ENCODE measurements at regions of chr4 and their contacts with region 1.

Region 1: DNA sequence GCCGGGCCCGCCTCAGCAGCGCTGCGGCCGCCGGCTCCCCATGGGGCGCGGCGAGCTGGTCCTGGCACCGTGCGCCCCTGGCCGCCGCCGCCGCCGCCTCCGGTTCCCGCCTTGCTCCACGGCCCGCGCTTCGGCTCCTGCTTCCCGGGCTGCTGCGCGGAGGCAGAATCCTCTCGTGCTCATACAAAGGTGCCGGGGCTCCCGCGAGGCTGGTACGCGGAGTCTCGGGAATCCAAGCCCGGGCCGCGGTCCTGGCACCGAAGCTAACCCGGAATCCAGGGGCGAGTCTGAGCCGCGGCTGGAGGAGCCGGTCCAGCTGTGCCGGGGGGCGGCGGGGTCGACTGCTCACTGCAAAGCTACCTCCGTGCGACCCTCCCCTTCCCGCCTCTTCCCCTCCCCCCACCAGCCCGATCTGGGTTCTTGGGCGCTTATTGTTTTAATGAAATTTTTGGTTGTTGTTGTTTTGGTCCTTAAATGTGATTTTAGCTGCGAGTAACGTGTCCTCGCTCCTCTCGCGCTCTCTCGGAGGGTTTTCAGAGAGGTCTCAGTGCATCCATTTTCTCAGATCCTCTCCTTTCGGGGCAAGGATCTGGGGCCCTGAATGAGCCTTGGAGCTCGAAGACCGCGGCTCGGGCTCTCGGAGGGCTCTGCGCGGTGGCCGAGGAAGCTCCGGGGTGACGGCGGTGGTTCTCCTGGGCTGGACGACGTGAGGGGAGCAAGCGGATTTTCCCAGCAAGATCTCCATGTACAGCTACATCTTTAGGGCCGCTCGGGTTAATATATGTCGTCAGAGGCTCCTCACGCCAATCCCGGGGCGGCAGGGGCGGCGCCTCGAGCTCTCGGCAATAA is at the start of gene HAND2:
- DNase-seq: peak; percentile 91
- H3K4me3 ChIP-seq: peak within 1 kb of the TSS; percentile 61 to 92
- H3K27ac ChIP-seq: peak within 1 kb of the TSS; percentile 99
- H3K4me1 ChIP-seq: peaks cover 0 to 3% of the 10 kb centered on the region in 2 experiments; a peak in 2 of 4 replicates
- H3K27me3 ChIP-seq: no peaks in the 10 kb centered on the region
- CTCF ChIP-seq: no peak
- EP300 ChIP-seq: peak; percentile 16 to 25; a peak in 2 of 4 replicates
- RAD21 ChIP-seq: no peak
- polyA plus RNA-seq, gene HAND2: 94.2 and 106 TPM in 2 replicates

Region 2: GRCh38 chr4:173360587-173361221 is 169.0 kb before region 1 on chr4:
- CTCF ChIA-PET with region 1: no interaction called
- POLR2A ChIA-PET with region 1: no interaction called
- DNase-seq: no peak
- H3K4me3 ChIP-seq: no peak overlapping the region
- H3K27ac ChIP-seq: no peak overlapping the region
- H3K4me1 ChIP-seq: peaks cover 2 to 3% of the 10 kb centered on the region in 2 experiments; a peak in 1 of 4 replicates
- H3K27me3 ChIP-seq: no peaks in the 10 kb centered on the region
- CTCF ChIP-seq: peak; percentile 48
- EP300 ChIP-seq: no peak
- RAD21 ChIP-seq: peak; percentile 42

Region 3: GRCh38 chr4:173505924-173506518 is 23.7 kb before region 1 on chr4:
- CTCF ChIA-PET with region 1: interaction called, 3 read pairs
- POLR2A ChIA-PET with region 1: interaction called, 21 read pairs
- DNase-seq: peak; percentile 77
- H3K4me3 ChIP-seq: peak overlapping the region in 1 of 2 experiments; percentile 66; a peak in 2 of 4 replicates
- H3K27ac ChIP-seq: peak overlapping the region; percentile 82 to 99
- H3K4me1 ChIP-seq: peaks cover 8 to 51% of the 10 kb centered on the region in 2 experiments; a peak in 2 of 4 replicates
- H3K27me3 ChIP-seq: no peaks in the 10 kb centered on the region
- CTCF ChIP-seq: peak; percentile 84
- EP300 ChIP-seq: no peak
- RAD21 ChIP-seq: peak; percentile 83

Region 4: GRCh38 chr4:173556398-173557131 is 26.9 kb after region 1 on chr4:
- CTCF ChIA-PET with region 1: no interaction called
- POLR2A ChIA-PET with region 1: no interaction called
- DNase-seq: no peak
- H3K4me3 ChIP-seq: no peak overlapping the region
- H3K27ac ChIP-seq: peak overlapping the region in 1 of 2 experiments; percentile 74; a peak in 2 of 4 replicates
- H3K4me1 ChIP-seq: peaks cover 0 to 12% of the 10 kb centered on the region in 2 experiments; a peak in 2 of 4 replicates
- H3K27me3 ChIP-seq: no peaks in the 10 kb centered on the region
- CTCF ChIP-seq: no peak
- EP300 ChIP-seq: no peak; a peak in 1 of 4 replicates
- RAD21 ChIP-seq: no peak

Region 5: DNA sequence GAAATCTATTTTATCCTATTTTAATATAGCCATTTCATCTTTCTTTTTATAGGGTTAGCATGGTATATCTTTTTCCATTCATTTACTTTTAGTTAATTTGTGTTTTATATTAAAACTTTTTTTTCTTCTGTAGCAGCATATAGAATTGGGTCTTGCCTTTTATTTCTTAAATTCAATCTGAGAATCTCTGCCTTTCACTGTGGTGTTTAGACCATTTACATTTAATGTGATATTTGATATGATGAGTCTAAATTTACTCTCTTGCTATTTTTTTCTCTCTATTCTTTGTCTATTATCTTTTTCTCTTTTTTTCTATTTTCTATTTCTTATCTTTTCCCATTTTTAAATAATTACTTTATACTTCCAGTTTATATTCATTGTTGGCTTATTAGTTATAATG is 105.7 kb after region 1 on chr4:
- CTCF ChIA-PET with region 1: no interaction called
- POLR2A ChIA-PET with region 1: no interaction called
- DNase-seq: no peak
- H3K4me3 ChIP-seq: no peak overlapping the region
- H3K27ac ChIP-seq: no peak overlapping the region
- H3K4me1 ChIP-seq: no peaks in the 10 kb centered on the region
- H3K27me3 ChIP-seq: no peaks in the 10 kb centered on the region
- CTCF ChIP-seq: no peak
- EP300 ChIP-seq: no peak
- RAD21 ChIP-seq: no peak

Region 6: GRCh38 chr4:173766171-173766600 is 236.5 kb after region 1 on chr4:
- CTCF ChIA-PET with region 1: no interaction called
- POLR2A ChIA-PET with region 1: interaction called, 18 read pairs
- DNase-seq: peak; percentile 67
- H3K4me3 ChIP-seq: no peak overlapping the region
- H3K27ac ChIP-seq: peak overlapping the region in 1 of 2 experiments; percentile 100; a peak in 2 of 4 replicates
- H3K4me1 ChIP-seq: peaks cover 0 to 45% of the 10 kb centered on the region in 2 experiments; a peak in 2 of 4 replicates
- H3K27me3 ChIP-seq: no peaks in the 10 kb centered on the region
- CTCF ChIP-seq: no peak
- EP300 ChIP-seq: peak; percentile 29 to 100; a peak in 2 of 4 replicates
- RAD21 ChIP-seq: peak; percentile 53

Region 7: GRCh38 chr4:174005422-174005821 is 475.7 kb after region 1 on chr4:
- CTCF ChIA-PET with region 1: interaction called, 3 read pairs
- POLR2A ChIA-PET with region 1: interaction called, 57 read pairs
- DNase-seq: no peak
- H3K4me3 ChIP-seq: no peak overlapping the region
- H3K27ac ChIP-seq: peak overlapping the region in 1 of 2 experiments; percentile 100; a peak in 2 of 4 replicates
- H3K4me1 ChIP-seq: peaks cover 5 to 27% of the 10 kb centered on the region in 2 experiments; a peak in 3 of 4 replicates
- H3K27me3 ChIP-seq: no peaks in the 10 kb centered on the region
- CTCF ChIP-seq: no peak
- EP300 ChIP-seq: peak in 1 of 2 experiments; percentile 22; a peak in 1 of 4 replicates
- RAD21 ChIP-seq: no peak

Region 8: GRCh38 chr4:174120446-174121295 is 591.0 kb after region 1 on chr4:
- CTCF ChIA-PET with region 1: no interaction called
- POLR2A ChIA-PET with region 1: interaction called, 24 read pairs
- DNase-seq: peak; percentile 69
- H3K4me3 ChIP-seq: peak overlapping the region; percentile 40 to 59
- H3K27ac ChIP-seq: peak overlapping the region; percentile 49 to 100; a peak in 3 of 4 replicates
- H3K4me1 ChIP-seq: peaks cover 4 to 11% of the 10 kb centered on the region in 2 experiments; a peak in 2 of 4 replicates
- H3K27me3 ChIP-seq: no peaks in the 10 kb centered on the region
- CTCF ChIP-seq: peak; percentile 72
- EP300 ChIP-seq: peak; percentile 5 to 67; a peak in 1 of 4 replicates
- RAD21 ChIP-seq: peak; percentile 79

Region 9: DNA sequence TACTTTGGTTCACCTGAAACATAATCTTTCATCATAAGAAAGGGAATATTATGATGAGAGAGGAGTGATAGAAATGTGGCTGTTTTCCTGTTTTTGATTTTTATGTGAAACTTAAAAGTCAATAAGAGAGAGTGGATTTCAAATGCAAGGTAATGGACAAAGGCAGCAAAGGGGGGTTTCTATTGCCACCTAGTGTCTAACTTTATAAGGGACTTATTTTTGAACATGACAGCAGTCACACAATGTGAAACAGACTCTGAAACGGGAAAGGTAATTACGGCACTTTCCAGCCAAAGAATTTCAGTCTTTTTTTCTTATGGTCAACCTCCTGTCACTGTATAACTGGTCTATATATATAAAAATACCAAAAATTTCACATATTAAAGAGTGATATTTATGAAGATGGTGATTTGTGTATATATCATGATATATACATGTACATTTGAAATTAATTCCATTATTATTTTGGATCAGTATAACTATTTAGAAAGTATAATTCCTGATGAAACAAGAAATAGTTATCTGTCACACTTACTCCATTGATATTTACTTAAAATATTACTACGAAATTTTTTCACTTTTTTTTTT is 626.6 kb after region 1 on chr4:
- CTCF ChIA-PET with region 1: interaction called, 3 read pairs
- POLR2A ChIA-PET with region 1: interaction called, 29 read pairs
- DNase-seq: peak; percentile 27
- H3K4me3 ChIP-seq: peak overlapping the region in 1 of 2 experiments; percentile 40; a peak in 1 of 4 replicates
- H3K27ac ChIP-seq: peak overlapping the region; percentile 74 to 100; a peak in 3 of 4 replicates
- H3K4me1 ChIP-seq: peaks cover 40 to 51% of the 10 kb centered on the region in 2 experiments; a peak in 3 of 4 replicates
- H3K27me3 ChIP-seq: no peaks in the 10 kb centered on the region
- CTCF ChIP-seq: peak; percentile 76
- EP300 ChIP-seq: peak in 1 of 2 experiments; percentile 56; a peak in 1 of 4 replicates
- RAD21 ChIP-seq: peak; percentile 94

Region 10: GRCh38 chr4:174222266-174222872 is 692.7 kb after region 1 on chr4:
- CTCF ChIA-PET with region 1: no interaction called
- POLR2A ChIA-PET with region 1: interaction called, 26 read pairs
- DNase-seq: no peak
- H3K4me3 ChIP-seq: no peak overlapping the region; a peak in 1 of 4 replicates
- H3K27ac ChIP-seq: peak overlapping the region in 1 of 2 experiments; percentile 36; a peak in 2 of 4 replicates
- H3K4me1 ChIP-seq: peaks cover 1 to 26% of the 10 kb centered on the region in 2 experiments; a peak in 3 of 4 replicates
- H3K27me3 ChIP-seq: no peaks in the 10 kb centered on the region
- CTCF ChIP-seq: peak; percentile 76
- EP300 ChIP-seq: no peak
- RAD21 ChIP-seq: peak; percentile 69

Measured in SK-N-SH (cell line).